Activated CD4-positive, alpha-beta T cell treated with anti-CD3 and anti-CD28 coated beads for 36 hours (primary cell): ENCODE measurements at regions of chr13 and their contacts with region 1.

Region 1: GRCh38 chr13:111280226-111280625 is 40.2 kb upstream of the TEX29 start:
- DNase-seq: no peak
- ATAC-seq: no peak
- H3K4me3 Mint-ChIP-seq: no peak overlapping the region
- H3K27ac Mint-ChIP-seq: no peak overlapping the region
- H3K4me1 Mint-ChIP-seq: peaks cover 16% of the 10 kb centered on the region
- H3K27me3 Mint-ChIP-seq: no peaks in the 10 kb centered on the region

Region 2: GRCh38 chr13:111327730-111328573 is 47.7 kb after region 1 on chr13:
- CTCF ChIA-PET with region 1: no interaction called
- POLR2A ChIA-PET with region 1: interaction called, 11 read pairs
- intact Hi-C with region 1: no loop called
- DNase-seq: no peak
- ATAC-seq: no peak
- H3K4me3 Mint-ChIP-seq: no peak overlapping the region
- H3K27ac Mint-ChIP-seq: no peak overlapping the region
- H3K4me1 Mint-ChIP-seq: peaks cover 5% of the 10 kb centered on the region
- H3K27me3 Mint-ChIP-seq: no peaks in the 10 kb centered on the region

Region 3: DNA sequence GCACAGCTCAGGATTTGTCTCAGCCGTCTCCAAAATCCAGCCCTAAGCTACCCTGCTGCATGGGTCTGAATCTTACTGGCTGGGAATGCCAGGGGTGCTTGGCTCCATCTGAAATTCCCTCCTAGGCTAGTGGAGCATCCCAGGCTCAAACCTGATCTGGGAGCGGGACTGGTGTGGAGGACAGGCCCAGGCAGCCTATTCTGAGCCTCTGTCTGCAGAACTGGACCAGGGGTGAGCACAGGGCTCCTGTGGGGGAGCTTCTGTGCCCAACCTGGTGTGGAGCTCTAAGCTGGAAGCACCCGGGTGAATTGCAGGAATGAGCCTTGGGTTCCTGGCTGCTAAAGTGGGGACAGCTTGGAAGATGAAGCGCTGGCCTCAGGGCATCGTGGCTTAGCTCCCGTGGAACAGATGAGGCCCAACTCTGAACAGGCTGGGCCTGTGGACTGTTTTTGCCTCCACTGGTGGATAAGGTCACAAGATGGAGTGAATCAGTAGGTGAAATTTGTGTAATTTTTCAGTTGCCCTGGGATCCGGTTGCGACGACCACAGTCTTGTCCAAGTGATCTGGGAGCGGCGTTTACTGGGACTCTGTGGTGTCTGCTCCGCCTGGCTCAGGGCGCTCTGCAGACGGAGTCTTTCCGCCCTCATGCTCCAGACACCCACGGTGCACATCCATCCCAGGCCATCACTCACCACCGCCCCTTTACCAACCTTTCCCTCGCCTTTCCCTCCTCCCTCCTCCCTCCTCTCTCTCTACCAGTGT is 119.7 kb after region 1 on chr13:
- CTCF ChIA-PET with region 1: no interaction called
- POLR2A ChIA-PET with region 1: no interaction called
- intact Hi-C with region 1: no loop called
- DNase-seq: no peak
- ATAC-seq: no peak
- H3K4me3 Mint-ChIP-seq: no peak overlapping the region
- H3K27ac Mint-ChIP-seq: no peak overlapping the region
- H3K4me1 Mint-ChIP-seq: no peaks in the 10 kb centered on the region
- H3K27me3 Mint-ChIP-seq: no peaks in the 10 kb centered on the region